Caco-2 (cell line): ENCODE measurements at regions of chr12 and their contacts with region 1.

Region 1: GRCh38 chr12:12562585-12563261 is at the start of gene DUSP16:
- DNase-seq: peak; percentile 97 to 99
- H3K4me3 ChIP-seq: peak within 1 kb of the TSS; percentile 78
- H3K4me3 Mint-ChIP-seq: peak within 1 kb of the TSS; percentile 79
- H3K27ac Mint-ChIP-seq: peak within 1 kb of the TSS; percentile 86
- H3K4me1 ChIP-seq: peaks cover 30% of the 10 kb centered on the region
- H3K4me1 Mint-ChIP-seq: peaks cover 27% of the 10 kb centered on the region
- H3K27me3 ChIP-seq: no peaks in the 10 kb centered on the region
- H3K27me3 Mint-ChIP-seq: no peaks in the 10 kb centered on the region
- CTCF ChIP-seq: peak; percentile 29 to 34
- total RNA-seq, gene DUSP16: 63.9 and 76.8 TPM in 2 replicates

Region 2: DNA sequence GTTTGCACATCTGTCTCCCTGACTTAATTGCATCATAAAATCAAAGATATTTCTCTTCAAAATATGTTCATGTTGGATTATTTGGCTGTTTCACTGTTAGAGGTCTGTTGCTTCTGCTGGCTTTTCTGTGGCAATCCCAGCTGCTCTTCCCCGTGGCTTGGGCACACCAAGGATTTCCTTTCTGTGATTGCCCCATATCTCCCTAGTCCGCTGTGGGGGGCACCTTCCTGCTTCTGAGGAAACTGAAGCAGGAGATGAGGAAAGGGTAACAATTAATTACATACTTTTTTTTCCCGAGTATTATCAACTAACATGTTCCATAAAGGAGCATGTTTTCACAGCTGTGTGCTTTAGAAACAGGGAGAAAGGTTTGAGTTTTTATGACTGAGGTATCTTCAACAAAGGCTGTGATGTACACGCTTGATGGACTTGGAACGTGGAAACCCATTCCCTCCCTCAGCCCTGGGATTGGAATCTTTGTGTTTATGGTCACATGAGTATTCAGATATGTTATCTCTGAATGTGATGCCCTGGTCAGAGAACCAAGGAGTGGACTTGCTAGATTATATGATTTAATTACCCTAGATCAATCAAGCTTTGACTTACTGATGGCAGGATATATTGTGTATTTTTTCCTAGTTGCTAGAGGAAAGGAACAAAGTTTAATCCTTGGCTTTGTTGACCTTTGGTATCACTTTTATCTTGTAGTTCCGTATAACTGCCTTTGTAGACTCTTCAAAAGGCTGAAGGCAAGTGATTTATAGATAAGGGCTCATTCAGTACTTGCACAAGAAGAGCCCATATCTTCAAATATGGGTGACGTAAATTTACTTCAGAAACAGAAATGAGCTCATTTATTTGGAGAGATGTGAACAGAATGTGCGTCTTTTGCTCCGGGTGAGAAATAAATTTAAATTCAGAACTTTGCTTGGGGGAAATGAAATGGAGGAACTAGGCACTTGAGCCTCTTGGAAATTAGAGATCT is 159.2 kb before region 1 on chr12:
- CTCF ChIA-PET with region 1: interaction called, 7 read pairs
- POLR2A ChIA-PET with region 1: interaction called, 8 read pairs
- intact Hi-C with region 1: loop called (anchors 1 kb)
- DNase-seq: peak; percentile 96 to 97
- H3K4me3 ChIP-seq: no peak overlapping the region
- H3K4me3 Mint-ChIP-seq: peak overlapping the region; percentile 54
- H3K27ac Mint-ChIP-seq: peak overlapping the region; percentile 94
- H3K4me1 ChIP-seq: peaks cover 61% of the 10 kb centered on the region
- H3K4me1 Mint-ChIP-seq: peaks cover 60% of the 10 kb centered on the region
- H3K27me3 ChIP-seq: no peaks in the 10 kb centered on the region
- H3K27me3 Mint-ChIP-seq: no peaks in the 10 kb centered on the region
- CTCF ChIP-seq: no peak

Region 3: GRCh38 chr12:12505544-12506495 is 56.9 kb before region 1 on chr12:
- CTCF ChIA-PET with region 1: interaction called, 3 read pairs
- POLR2A ChIA-PET with region 1: no interaction called
- intact Hi-C with region 1: loop called (anchors 1 kb)
- DNase-seq: peak in 1 of 2 experiments; percentile 36
- H3K4me3 ChIP-seq: no peak overlapping the region
- H3K4me3 Mint-ChIP-seq: peak overlapping the region; percentile 42
- H3K27ac Mint-ChIP-seq: peak overlapping the region; percentile 19
- H3K4me1 ChIP-seq: peaks cover 37% of the 10 kb centered on the region
- H3K4me1 Mint-ChIP-seq: peaks cover 40% of the 10 kb centered on the region
- H3K27me3 ChIP-seq: no peaks in the 10 kb centered on the region
- H3K27me3 Mint-ChIP-seq: no peaks in the 10 kb centered on the region
- CTCF ChIP-seq: no peak

Region 4: DNA sequence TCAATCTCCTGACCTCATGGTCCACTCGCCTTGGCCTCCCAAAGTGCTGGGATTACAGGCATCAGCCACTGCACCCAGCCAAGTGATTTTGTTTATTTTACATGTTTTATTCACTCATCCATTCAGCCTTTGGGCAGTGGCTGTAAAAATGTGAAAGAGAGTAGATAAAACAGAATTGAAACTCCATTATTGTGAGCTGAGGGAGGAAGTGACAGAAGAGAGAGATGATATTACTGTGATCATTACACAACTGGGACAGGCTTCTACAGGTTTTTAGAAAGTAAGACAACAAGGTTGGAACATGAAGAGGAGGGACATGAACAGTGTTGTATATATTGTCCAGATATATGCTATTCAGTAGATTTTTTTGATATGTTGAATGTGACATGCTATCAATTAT is 73.9 kb after region 1 on chr12:
- CTCF ChIA-PET with region 1: no interaction called
- POLR2A ChIA-PET with region 1: no interaction called
- intact Hi-C with region 1: no loop called
- DNase-seq: no peak
- H3K4me3 ChIP-seq: no peak overlapping the region
- H3K4me3 Mint-ChIP-seq: no peak overlapping the region
- H3K27ac Mint-ChIP-seq: no peak overlapping the region
- H3K4me1 ChIP-seq: no peaks in the 10 kb centered on the region
- H3K4me1 Mint-ChIP-seq: peaks cover 6% of the 10 kb centered on the region
- H3K27me3 ChIP-seq: no peaks in the 10 kb centered on the region
- H3K27me3 Mint-ChIP-seq: no peaks in the 10 kb centered on the region
- CTCF ChIP-seq: no peak

Region 5: DNA sequence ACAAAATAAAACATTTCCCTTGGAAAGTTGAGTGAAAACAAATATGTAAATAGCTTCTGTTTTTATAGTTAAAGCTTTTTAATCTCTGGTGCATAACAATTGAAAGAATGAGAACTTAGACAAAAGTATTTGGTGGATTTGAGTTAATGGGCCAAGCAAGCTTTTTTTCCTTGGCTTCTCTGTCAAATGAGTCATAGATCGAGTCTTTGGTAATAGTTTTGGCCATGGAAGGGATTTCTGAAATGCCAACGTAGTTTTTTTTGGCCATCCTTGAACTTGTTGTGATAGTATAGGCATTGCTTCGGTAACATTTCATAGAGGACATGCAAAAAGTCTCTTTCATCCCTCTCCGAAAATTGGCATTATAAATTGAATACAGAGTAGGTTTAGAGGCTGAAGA is 98.4 kb after region 1 on chr12:
- CTCF ChIA-PET with region 1: interaction called, 3 read pairs
- POLR2A ChIA-PET with region 1: no interaction called
- intact Hi-C with region 1: loop called (anchors 1 kb)
- DNase-seq: no peak
- H3K4me3 ChIP-seq: no peak overlapping the region
- H3K4me3 Mint-ChIP-seq: no peak overlapping the region
- H3K27ac Mint-ChIP-seq: no peak overlapping the region
- H3K4me1 ChIP-seq: no peaks in the 10 kb centered on the region
- H3K4me1 Mint-ChIP-seq: no peaks in the 10 kb centered on the region
- H3K27me3 ChIP-seq: no peaks in the 10 kb centered on the region
- H3K27me3 Mint-ChIP-seq: no peaks in the 10 kb centered on the region
- CTCF ChIP-seq: no peak

Region 6: DNA sequence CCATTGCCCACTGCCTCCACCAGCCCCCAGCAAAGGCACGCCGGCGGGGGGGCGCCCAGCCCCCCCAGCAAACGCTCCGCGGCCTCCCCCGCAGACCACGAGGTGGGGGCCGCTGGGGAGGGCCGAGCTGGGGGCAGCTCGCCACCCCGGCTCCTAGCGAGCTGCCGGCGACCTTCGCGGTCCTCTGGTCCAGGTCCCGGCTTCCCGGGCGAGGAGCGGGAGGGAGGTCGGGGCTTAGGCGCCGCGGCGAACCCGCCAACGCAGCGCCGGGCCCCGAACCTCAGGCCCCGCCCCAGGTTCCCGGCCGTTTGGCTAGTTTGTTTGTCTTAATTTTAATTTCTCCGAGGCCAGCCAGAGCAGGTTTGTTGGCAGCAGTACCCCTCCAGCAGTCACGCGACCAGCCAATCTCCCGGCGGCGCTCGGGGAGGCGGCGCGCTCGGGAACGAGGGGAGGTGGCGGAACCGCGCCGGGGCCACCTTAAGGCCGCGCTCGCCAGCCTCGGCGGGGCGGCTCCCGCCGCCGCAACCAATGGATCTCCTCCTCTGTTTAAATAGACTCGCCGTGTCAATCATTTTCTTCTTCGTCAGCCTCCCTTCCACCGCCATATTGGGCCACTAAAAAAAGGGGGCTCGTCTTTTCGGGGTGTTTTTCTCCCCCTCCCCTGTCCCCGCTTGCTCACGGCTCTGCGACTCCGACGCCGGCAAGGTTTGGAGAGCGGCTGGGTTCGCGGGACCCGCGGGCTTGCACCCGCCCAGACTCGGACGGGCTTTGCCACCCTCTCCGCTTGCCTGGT is 154.3 kb after region 1 on chr12 and contains the start of gene CDKN1B:
- CTCF ChIA-PET with region 1: no interaction called
- POLR2A ChIA-PET with region 1: no interaction called
- intact Hi-C with region 1: loop called (anchors 1 kb)
- DNase-seq: peak; percentile 97
- H3K4me3 ChIP-seq: peak within 1 kb of the TSS; percentile 77
- H3K4me3 Mint-ChIP-seq: peak within 1 kb of the TSS; percentile 76
- H3K27ac Mint-ChIP-seq: peak within 1 kb of the TSS; percentile 71
- H3K4me1 ChIP-seq: peaks cover 41% of the 10 kb centered on the region
- H3K4me1 Mint-ChIP-seq: peaks cover 47% of the 10 kb centered on the region
- H3K27me3 ChIP-seq: no peaks in the 10 kb centered on the region
- H3K27me3 Mint-ChIP-seq: no peaks in the 10 kb centered on the region
- CTCF ChIP-seq: no peak
- total RNA-seq, gene CDKN1B: 107 and 115 TPM in 2 replicates